ENCODE measurements at regions of chr3 and their contacts with region 1.

Region 1: DNA sequence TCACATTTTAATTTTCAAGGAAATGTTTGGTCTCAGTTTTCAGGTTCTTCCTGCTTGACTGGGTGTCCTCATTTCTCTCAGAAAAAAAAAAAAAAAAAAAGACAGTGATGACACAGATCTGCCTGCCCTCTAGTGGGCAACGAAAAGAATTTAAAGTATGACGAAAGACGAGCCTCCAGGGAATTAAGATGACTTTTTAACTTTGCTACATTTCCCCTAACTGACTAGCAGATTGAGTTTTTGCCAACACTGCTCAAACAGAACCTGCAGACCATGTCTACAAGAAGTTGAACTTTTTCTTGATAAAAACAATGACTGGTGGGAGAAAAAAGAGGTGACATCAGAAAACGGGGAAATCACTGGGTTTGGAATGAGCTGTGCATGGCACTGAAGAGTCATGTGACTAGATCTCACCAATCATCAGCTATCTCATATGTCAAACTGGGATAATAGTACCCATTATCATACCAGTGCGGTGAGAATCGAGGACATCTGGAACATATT is 40.8 kb downstream of the EOMES start:
- DNase-seq: peak; percentile 38
- ATAC-seq: peak; percentile 87
- H3K4me3 ChIP-seq: no peak overlapping the region
- H3K27ac ChIP-seq: no peak overlapping the region
- H3K4me1 ChIP-seq: no peaks in the 10 kb centered on the region
- H3K27me3 ChIP-seq: no peaks in the 10 kb centered on the region
- CTCF ChIP-seq: peak; percentile 47 to 79 (median 61)
- EP300 ChIP-seq: no peak
- POLR2A ChIP-seq: no peak
- RAD21 ChIP-seq: peak; percentile 91

Region 2: DNA sequence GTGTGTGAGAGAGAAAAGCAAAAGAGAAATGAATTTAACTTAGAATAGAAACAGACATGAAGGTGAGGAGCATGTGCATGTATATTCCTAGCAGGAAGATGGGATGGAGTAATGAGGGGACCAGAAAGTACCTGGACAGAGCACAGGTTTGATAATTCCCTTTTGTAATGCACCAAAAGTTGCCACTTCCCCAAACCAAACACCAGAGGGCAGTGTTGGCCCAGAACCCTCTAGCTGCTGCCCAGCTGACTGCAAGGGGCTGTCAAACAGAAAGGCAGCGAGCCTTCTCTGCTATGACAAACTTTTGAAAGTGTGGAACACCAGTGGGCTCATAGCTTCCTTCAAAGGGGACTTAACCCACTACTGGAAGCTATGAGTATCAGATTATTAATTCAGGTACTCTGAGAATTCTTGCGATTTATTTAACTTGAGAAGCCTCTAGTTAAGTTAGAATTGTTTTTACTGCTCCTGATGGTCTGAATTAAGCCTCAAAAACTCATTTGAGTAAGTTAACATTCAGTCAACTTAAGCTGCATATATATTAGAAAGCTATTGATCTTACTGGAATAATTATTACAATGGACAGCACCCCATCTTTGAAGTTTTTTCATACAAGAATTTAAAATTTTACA is 547.0 kb before region 1 on chr3:
- CTCF ChIA-PET with region 1: interaction called, 10 read pairs
- POLR2A ChIA-PET with region 1: interaction called, 3 read pairs
- RAD21 ChIA-PET with region 1: interaction called, 6 read pairs
- SMC1A ChIA-PET with region 1: interaction called, 7 read pairs
- in situ Hi-C with region 1: no loop called
- intact Hi-C with region 1: loop called (anchors 1 kb)
- DNase-seq: peak; percentile 8
- ATAC-seq: peak; percentile 97
- H3K4me3 ChIP-seq: no peak overlapping the region
- H3K27ac ChIP-seq: no peak overlapping the region
- H3K4me1 ChIP-seq: no peaks in the 10 kb centered on the region
- H3K27me3 ChIP-seq: no peaks in the 10 kb centered on the region
- CTCF ChIP-seq: peak; percentile 85 to 90 (median 90)
- EP300 ChIP-seq: no peak
- POLR2A ChIP-seq: no peak
- RAD21 ChIP-seq: peak; percentile 92

Region 3: GRCh38 chr3:27312044-27312668 is 369.1 kb before region 1 on chr3:
- CTCF ChIA-PET with region 1: interaction called, 49 read pairs
- POLR2A ChIA-PET with region 1: interaction called, 5 read pairs
- RAD21 ChIA-PET with region 1: interaction called, 21 read pairs
- SMC1A ChIA-PET with region 1: interaction called, 20 read pairs
- in situ Hi-C with region 1: loop called (anchors 5 kb)
- intact Hi-C with region 1: loop called (anchors 1 kb)
- DNase-seq: peak; percentile 15
- ATAC-seq: peak; percentile 94
- H3K4me3 ChIP-seq: no peak overlapping the region
- H3K27ac ChIP-seq: no peak overlapping the region
- H3K4me1 ChIP-seq: no peaks in the 10 kb centered on the region
- H3K27me3 ChIP-seq: no peaks in the 10 kb centered on the region
- CTCF ChIP-seq: peak; percentile 64 to 77 (median 76); a peak in 5 of 6 replicates
- EP300 ChIP-seq: no peak
- POLR2A ChIP-seq: no peak
- RAD21 ChIP-seq: peak; percentile 83

Region 4: DNA sequence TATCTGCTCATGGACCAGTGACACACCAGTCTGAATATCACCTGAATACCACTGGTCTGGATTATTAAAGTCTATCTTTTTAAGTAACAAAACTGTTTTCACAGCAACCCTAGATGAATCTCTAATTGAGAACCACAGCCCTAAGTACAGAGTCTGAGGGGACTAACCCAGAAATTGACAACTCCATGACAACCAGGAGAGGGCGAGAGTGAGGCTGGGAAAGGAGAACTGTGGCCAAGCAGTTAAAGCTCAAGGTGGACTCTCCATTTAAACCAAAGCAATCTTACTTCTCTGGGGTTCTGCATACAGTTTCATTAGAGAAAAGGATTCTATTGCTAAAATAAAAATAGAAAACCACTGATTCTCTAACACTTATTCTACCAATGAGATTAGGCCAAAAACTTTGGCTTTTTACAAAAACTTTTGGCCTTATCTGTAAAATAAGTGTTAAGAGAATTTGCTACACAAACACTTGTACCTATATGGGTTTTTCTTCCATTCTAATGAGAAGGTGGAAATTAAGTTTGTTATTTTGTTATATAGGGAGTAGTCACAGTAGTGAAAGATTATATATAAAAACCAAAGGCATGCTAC is 323.5 kb before region 1 on chr3:
- CTCF ChIA-PET with region 1: interaction called, 18 read pairs
- POLR2A ChIA-PET with region 1: interaction called, 6 read pairs
- RAD21 ChIA-PET with region 1: interaction called, 8 read pairs
- SMC1A ChIA-PET with region 1: interaction called, 6 read pairs
- in situ Hi-C with region 1: no loop called
- intact Hi-C with region 1: loop called (anchors 2 kb)
- DNase-seq: no peak
- ATAC-seq: peak; percentile 96
- H3K4me3 ChIP-seq: no peak overlapping the region
- H3K27ac ChIP-seq: no peak overlapping the region
- H3K4me1 ChIP-seq: peaks cover 14% of the 10 kb centered on the region
- H3K27me3 ChIP-seq: no peaks in the 10 kb centered on the region
- CTCF ChIP-seq: peak; percentile 72 to 84 (median 72)
- EP300 ChIP-seq: no peak
- POLR2A ChIP-seq: no peak
- RAD21 ChIP-seq: peak; percentile 82

Region 5: GRCh38 chr3:27368831-27369607 is 312.3 kb before region 1 on chr3 and contains the start of gene NEK10:
- CTCF ChIA-PET with region 1: no interaction called
- POLR2A ChIA-PET with region 1: no interaction called
- RAD21 ChIA-PET with region 1: interaction called, 3 read pairs
- SMC1A ChIA-PET with region 1: interaction called, 10 read pairs
- in situ Hi-C with region 1: no loop called
- intact Hi-C with region 1: no loop called
- DNase-seq: peak; percentile 55
- ATAC-seq: peak; percentile 100
- H3K4me3 ChIP-seq: peak within 1 kb of the TSS; percentile 69
- H3K27ac ChIP-seq: no peak within 1 kb of the TSS
- H3K4me1 ChIP-seq: no peaks in the 10 kb centered on the region
- H3K27me3 ChIP-seq: no peaks in the 10 kb centered on the region
- CTCF ChIP-seq: no peak
- EP300 ChIP-seq: no peak
- POLR2A ChIP-seq: peak; percentile 59; the same call in 1 of the 2 replicates
- RAD21 ChIP-seq: no peak
- polyA plus RNA-seq, gene NEK10: not detected

Region 6: DNA sequence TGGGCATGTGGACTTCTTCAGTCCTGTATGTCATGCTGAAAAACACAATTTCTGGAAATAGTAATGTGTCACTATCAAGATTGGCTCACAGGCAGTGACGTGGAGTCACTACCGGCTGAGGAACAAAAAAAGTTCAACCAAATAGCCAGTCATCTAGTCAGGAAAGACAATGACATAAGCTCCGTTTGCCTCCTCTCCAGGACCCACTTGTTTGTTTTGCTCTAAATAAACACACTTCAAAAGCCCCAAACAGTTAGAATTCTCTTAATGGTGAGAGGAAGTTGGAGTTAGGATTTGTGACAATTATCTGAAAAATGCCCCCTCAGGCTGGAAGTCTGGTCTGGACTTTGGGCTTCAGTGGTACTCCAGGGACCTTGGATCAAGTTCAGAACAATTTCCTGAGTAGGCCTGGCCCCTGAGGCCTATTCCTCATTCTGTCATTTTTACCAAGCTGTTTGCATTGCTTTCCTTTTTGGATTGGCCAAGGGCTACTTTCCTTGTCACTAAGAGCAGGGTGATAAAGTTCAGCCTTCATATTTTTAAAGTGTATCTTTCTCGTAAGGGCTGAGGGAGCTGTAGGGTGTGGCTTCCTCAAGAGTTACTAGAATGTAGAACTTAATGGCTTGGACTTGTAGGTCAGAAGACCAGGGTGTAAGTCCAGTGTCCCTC is 58.1 kb before region 1 on chr3:
- CTCF ChIA-PET with region 1: no interaction called
- POLR2A ChIA-PET with region 1: no interaction called
- RAD21 ChIA-PET with region 1: no interaction called
- SMC1A ChIA-PET with region 1: no interaction called
- in situ Hi-C with region 1: no loop called
- intact Hi-C with region 1: no loop called
- DNase-seq: no peak
- ATAC-seq: no peak
- H3K4me3 ChIP-seq: no peak overlapping the region
- H3K27ac ChIP-seq: no peak overlapping the region
- H3K4me1 ChIP-seq: no peaks in the 10 kb centered on the region
- H3K27me3 ChIP-seq: no peaks in the 10 kb centered on the region
- CTCF ChIP-seq: no peak
- EP300 ChIP-seq: no peak
- POLR2A ChIP-seq: no peak
- RAD21 ChIP-seq: no peak

Region 7: DNA sequence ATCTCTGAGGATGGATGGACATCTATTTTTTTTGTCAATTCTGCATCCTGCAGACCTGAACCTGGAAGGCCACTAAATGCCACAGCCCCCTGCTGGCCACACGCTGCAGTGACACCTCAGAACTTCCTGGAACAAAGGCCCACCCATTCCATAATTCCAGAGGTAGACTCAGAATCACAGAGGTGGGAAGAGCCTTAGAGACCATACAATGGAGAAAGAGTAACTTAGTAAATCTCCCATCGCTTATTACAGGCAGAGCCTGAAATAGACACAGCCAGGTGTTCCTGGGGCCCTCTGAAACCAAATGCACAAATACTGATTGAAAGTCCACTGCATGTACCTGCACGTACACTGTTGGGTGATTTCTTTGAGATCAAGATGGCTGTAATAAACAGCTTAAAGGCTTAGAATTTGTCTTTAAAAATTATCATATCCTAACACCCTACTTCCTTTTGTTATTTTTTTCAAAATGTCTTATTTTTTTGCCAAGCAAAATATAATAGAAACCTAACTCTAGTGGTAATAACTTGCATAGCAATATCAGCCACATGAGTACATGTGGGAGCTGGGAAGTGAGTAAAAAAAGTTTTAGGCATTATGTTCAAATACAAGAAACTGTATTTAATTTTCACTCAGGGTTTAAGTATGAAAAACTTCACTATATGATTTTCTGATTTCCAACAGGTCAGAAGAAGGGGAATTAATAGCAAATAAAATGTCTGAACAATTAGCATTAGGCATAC is 21.8 kb before region 1 on chr3:
- CTCF ChIA-PET with region 1: interaction called, 19 read pairs
- POLR2A ChIA-PET with region 1: interaction called, 5 read pairs
- RAD21 ChIA-PET with region 1: interaction called, 3 read pairs
- SMC1A ChIA-PET with region 1: interaction called, 5 read pairs
- in situ Hi-C with region 1: no loop called
- intact Hi-C with region 1: no loop called
- DNase-seq: no peak
- ATAC-seq: peak; percentile 85
- H3K4me3 ChIP-seq: no peak overlapping the region
- H3K27ac ChIP-seq: no peak overlapping the region
- H3K4me1 ChIP-seq: no peaks in the 10 kb centered on the region
- H3K27me3 ChIP-seq: no peaks in the 10 kb centered on the region
- CTCF ChIP-seq: peak; percentile 69 to 86 (median 80)
- EP300 ChIP-seq: no peak
- POLR2A ChIP-seq: no peak
- RAD21 ChIP-seq: peak; percentile 55

Region 8: GRCh38 chr3:27666708-27667107 is 14.6 kb before region 1 on chr3:
- CTCF ChIA-PET with region 1: interaction called, 37 read pairs
- POLR2A ChIA-PET with region 1: interaction called, 3 read pairs
- RAD21 ChIA-PET with region 1: interaction called, 5 read pairs
- SMC1A ChIA-PET with region 1: interaction called, 38 read pairs
- in situ Hi-C with region 1: no loop called
- intact Hi-C with region 1: no loop called
- DNase-seq: no peak
- ATAC-seq: peak; percentile 22; the same call in 1 of the 3 replicates
- H3K4me3 ChIP-seq: no peak overlapping the region
- H3K27ac ChIP-seq: no peak overlapping the region
- H3K4me1 ChIP-seq: peaks cover 4% of the 10 kb centered on the region
- H3K27me3 ChIP-seq: no peaks in the 10 kb centered on the region
- CTCF ChIP-seq: no peak
- EP300 ChIP-seq: no peak
- POLR2A ChIP-seq: no peak
- RAD21 ChIP-seq: no peak

Region 9: DNA sequence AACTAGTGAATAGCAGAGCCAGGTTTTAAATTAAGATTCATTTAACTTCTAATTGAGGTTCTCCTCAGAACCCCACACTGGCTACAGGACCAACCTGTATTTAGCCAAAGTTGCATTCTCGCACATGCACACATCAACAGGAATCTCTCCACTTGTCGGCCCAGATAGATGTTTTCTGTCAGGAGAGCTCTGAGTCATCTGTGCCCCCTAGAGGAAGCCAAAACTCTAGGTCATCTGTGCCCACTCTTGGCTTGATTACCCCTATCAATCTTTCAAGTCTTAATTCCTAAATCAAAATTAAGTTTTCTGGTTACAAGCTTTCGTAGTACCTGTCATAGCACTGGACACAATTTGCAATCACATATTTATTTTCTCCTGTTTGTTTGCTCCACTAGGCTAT is 145.7 kb after region 1 on chr3:
- CTCF ChIA-PET with region 1: no interaction called
- POLR2A ChIA-PET with region 1: no interaction called
- RAD21 ChIA-PET with region 1: no interaction called
- SMC1A ChIA-PET with region 1: no interaction called
- in situ Hi-C with region 1: no loop called
- intact Hi-C with region 1: no loop called
- DNase-seq: no peak
- ATAC-seq: peak; percentile 48; the same call in 2 of the 3 replicates
- H3K4me3 ChIP-seq: no peak overlapping the region
- H3K27ac ChIP-seq: no peak overlapping the region
- H3K4me1 ChIP-seq: no peaks in the 10 kb centered on the region
- H3K27me3 ChIP-seq: no peaks in the 10 kb centered on the region
- CTCF ChIP-seq: no peak; a peak in 1 of 6 replicates
- EP300 ChIP-seq: no peak
- POLR2A ChIP-seq: no peak
- RAD21 ChIP-seq: no peak

Region 10: DNA sequence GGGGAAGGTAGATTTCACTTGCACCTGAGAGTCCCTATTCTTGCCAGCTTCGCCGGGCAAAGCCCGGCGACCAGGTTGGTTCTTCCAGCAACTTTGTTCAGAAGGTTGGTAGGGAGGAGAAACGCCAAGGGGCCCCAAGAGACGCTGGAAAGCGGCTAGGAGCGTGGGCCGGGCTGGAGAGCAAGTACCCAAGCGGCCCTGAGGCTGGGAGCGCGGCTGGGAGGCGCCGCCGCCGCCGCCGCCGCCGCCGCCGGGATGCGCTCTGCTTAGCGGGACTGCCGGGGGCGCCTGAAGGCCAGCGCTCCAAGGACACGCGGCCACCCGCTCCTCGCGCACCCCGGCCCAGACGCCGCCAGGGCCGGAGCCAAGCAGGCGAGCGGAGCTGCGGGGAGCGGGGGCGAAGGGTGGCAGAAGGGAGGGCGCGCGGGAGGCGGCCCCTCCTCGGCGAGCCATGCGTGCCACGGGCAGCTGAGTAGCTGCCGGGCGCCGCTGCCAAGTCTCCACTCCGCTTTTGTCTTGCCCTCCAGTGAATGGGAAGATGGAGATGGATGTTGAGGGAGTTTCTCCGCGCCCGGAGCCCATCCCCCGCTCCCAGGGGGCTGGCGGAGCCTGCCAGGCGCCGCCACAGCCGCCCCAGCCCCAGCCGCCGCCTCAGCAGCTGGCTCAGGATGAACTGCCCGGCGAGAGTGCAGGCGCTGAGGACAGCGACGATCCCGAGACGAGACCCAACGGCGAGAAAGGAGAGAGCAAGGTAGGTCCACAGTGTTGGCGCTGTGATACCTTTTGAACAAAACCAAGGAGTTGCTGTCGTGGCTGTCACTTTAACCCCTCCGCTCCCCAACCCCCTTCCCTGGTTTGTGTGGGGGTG is 894.7 kb after region 1 on chr3:
- CTCF ChIA-PET with region 1: no interaction called
- POLR2A ChIA-PET with region 1: no interaction called
- RAD21 ChIA-PET with region 1: no interaction called
- SMC1A ChIA-PET with region 1: no interaction called
- in situ Hi-C with region 1: no loop called
- intact Hi-C with region 1: no loop called
- DNase-seq: no peak
- ATAC-seq: no peak
- H3K4me3 ChIP-seq: no peak overlapping the region
- H3K27ac ChIP-seq: no peak overlapping the region
- H3K4me1 ChIP-seq: no peaks in the 10 kb centered on the region
- H3K27me3 ChIP-seq: peaks cover 6 to 7% of the 10 kb centered on the region in 2 experiments
- CTCF ChIP-seq: no peak
- EP300 ChIP-seq: no peak
- POLR2A ChIP-seq: no peak
- RAD21 ChIP-seq: no peak